ENCODE measurements at regions of chr2 and their contacts with region 1.

Region 1: GRCh38 chr2:236512902-236513435 is 56.7 kb upstream of the ACKR3 start:
- DNase-seq: peak; percentile 79
- H3K4me3 Mint-ChIP-seq: no peak overlapping the region
- H3K27ac Mint-ChIP-seq: no peak overlapping the region
- H3K4me1 Mint-ChIP-seq: no peaks in the 10 kb centered on the region
- H3K27me3 Mint-ChIP-seq: peaks cover 31% of the 10 kb centered on the region

Region 2: GRCh38 chr2:236523249-236523648 is 10.3 kb after region 1 on chr2:
- CTCF ChIA-PET with region 1: interaction called, 11 read pairs
- POLR2A ChIA-PET with region 1: no interaction called
- DNase-seq: no peak
- H3K4me3 Mint-ChIP-seq: no peak overlapping the region
- H3K27ac Mint-ChIP-seq: no peak overlapping the region
- H3K4me1 Mint-ChIP-seq: no peaks in the 10 kb centered on the region
- H3K27me3 Mint-ChIP-seq: peaks cover 32% of the 10 kb centered on the region

Region 3: GRCh38 chr2:236536727-236537398 is 23.9 kb after region 1 on chr2:
- CTCF ChIA-PET with region 1: interaction called, 32 read pairs
- POLR2A ChIA-PET with region 1: interaction called, 5 read pairs
- DNase-seq: peak; percentile 68
- H3K4me3 Mint-ChIP-seq: peak overlapping the region; percentile 92
- H3K27ac Mint-ChIP-seq: peak overlapping the region; percentile 88
- H3K4me1 Mint-ChIP-seq: peaks cover 58% of the 10 kb centered on the region
- H3K27me3 Mint-ChIP-seq: peaks cover 8% of the 10 kb centered on the region

Region 4: GRCh38 chr2:236558993-236559978 is 46.3 kb after region 1 on chr2:
- CTCF ChIA-PET with region 1: interaction called, 22 read pairs
- POLR2A ChIA-PET with region 1: interaction called, 3 read pairs
- DNase-seq: no peak
- H3K4me3 Mint-ChIP-seq: no peak overlapping the region
- H3K27ac Mint-ChIP-seq: no peak overlapping the region
- H3K4me1 Mint-ChIP-seq: peaks cover 28% of the 10 kb centered on the region
- H3K27me3 Mint-ChIP-seq: peaks cover 20% of the 10 kb centered on the region